Calu3 (cell line): ENCODE measurements at regions of chr4 and their contacts with region 1.

Region 1: GRCh38 chr4:111631215-111631999 is 513.8 kb upstream of the FAM241A start:
- DNase-seq: no peak
- H3K4me3 Mint-ChIP-seq: no peak overlapping the region
- H3K27ac Mint-ChIP-seq: no peak overlapping the region
- H3K4me1 Mint-ChIP-seq: no peaks in the 10 kb centered on the region
- H3K27me3 Mint-ChIP-seq: no peaks in the 10 kb centered on the region
- CTCF ChIP-seq: no peak

Region 2: DNA sequence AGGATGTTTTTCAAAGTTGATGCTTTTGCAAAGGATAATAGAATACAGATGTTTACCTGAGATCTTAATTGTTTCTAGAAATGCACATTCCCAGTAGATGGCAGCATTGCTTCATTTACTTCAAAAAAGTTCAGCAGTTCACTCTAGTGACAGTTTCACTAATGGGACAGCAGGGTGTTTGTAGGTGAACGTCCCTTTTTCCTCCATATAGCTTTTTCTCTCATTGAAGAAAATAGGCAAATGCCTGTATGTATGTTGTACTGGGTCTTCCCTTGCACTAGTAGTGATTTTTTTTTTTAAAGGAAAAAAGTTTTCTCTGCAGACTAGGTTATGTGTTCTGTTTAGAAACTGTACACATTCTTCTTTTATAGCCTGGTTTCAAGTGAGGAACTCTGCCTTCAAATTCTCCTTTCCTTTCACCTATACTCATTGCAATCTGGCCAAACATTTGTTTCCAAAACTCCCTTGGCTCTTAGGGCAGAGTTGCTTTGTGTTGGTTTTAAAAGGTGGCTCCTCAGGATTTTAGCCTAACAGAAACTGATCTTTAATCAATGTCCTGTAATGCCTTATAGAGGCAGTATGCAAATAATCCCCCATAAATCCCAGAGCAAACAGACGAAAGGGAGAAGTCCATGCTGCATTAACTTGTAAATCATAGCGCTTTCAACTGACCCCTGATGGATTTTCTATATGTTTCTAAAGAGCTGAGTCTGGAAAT is 1632.4 kb before region 1 on chr4:
- CTCF ChIA-PET with region 1: no interaction called
- intact Hi-C with region 1: loop called (anchors 2 kb)
- DNase-seq: peak; percentile 30
- H3K4me3 Mint-ChIP-seq: no peak overlapping the region
- H3K27ac Mint-ChIP-seq: no peak overlapping the region
- H3K4me1 Mint-ChIP-seq: no peaks in the 10 kb centered on the region
- H3K27me3 Mint-ChIP-seq: no peaks in the 10 kb centered on the region
- CTCF ChIP-seq: no peak

Region 3: DNA sequence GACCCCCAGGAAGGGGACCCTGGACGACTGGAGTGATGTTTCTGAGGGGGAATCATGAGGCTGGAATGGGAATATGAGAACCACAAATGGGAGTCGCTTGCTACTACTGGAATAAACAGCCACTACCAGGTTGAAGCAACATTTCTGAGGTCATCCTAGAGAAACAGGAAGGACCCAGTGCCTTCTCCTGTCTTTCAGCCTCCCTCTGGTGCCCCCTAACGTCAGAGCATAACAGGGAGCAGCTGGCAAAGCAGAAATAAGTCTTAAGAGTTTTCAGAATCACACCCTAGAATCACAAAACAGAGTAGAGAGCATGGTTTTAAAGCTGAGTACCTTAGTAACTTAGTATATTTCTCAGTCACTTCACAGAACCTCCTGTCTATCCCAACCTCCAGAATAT is 660.8 kb before region 1 on chr4:
- CTCF ChIA-PET with region 1: no interaction called
- intact Hi-C with region 1: loop called (anchors 10 kb)
- DNase-seq: peak; percentile 72
- H3K4me3 Mint-ChIP-seq: no peak overlapping the region
- H3K27ac Mint-ChIP-seq: no peak overlapping the region
- H3K4me1 Mint-ChIP-seq: no peaks in the 10 kb centered on the region
- H3K27me3 Mint-ChIP-seq: no peaks in the 10 kb centered on the region
- CTCF ChIP-seq: peak; percentile 44

Region 4: DNA sequence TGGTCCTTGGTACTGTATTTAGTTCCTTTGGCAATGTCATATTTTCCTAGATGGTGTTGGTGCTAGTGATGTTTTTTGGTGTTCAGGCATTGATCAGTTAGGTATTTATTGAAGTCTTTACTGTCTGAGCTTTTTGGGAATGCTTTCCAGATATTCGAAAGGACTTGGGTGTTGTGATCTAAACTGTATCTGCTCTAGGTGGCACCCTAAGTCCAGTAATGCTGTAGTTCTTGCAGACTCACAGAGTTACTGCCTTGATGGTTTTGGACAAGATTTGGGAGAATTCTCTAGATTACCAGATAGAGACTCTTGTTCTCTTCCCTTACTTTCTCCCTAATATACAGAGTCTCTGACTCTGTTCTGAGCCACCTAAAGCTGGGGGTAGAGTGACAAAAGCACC is 495.0 kb before region 1 on chr4:
- CTCF ChIA-PET with region 1: interaction called, 8 read pairs
- intact Hi-C with region 1: loop called (anchors 1 kb)
- DNase-seq: peak; percentile 10
- H3K4me3 Mint-ChIP-seq: no peak overlapping the region
- H3K27ac Mint-ChIP-seq: no peak overlapping the region
- H3K4me1 Mint-ChIP-seq: no peaks in the 10 kb centered on the region
- H3K27me3 Mint-ChIP-seq: no peaks in the 10 kb centered on the region
- CTCF ChIP-seq: no peak

Region 5: GRCh38 chr4:111283061-111283677 is 348.2 kb before region 1 on chr4:
- CTCF ChIA-PET with region 1: no interaction called
- intact Hi-C with region 1: loop called (anchors 2 kb)
- DNase-seq: peak; percentile 72
- H3K4me3 Mint-ChIP-seq: no peak overlapping the region
- H3K27ac Mint-ChIP-seq: no peak overlapping the region
- H3K4me1 Mint-ChIP-seq: no peaks in the 10 kb centered on the region
- H3K27me3 Mint-ChIP-seq: no peaks in the 10 kb centered on the region
- CTCF ChIP-seq: peak; percentile 43

Region 6: DNA sequence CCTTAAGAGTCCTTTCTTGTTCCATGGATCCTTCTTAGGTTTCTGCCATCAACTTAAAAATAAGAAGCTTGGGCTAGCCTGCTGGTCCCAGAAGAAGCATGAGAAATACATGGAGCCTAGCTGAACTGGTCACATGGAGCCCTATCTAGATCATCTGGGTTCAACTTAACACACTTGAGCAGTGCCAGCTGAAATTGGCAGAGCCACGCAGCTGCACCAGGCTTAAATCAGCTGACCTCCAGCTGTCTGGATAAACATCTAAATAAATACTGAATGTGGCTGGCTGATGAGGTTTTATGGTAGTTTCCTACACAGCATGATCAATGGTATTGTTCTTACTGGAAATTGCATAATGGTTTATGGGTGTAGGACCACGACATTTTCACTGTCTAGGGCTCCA is 84.5 kb before region 1 on chr4:
- CTCF ChIA-PET with region 1: no interaction called
- intact Hi-C with region 1: no loop called
- DNase-seq: no peak
- H3K4me3 Mint-ChIP-seq: no peak overlapping the region
- H3K27ac Mint-ChIP-seq: no peak overlapping the region
- H3K4me1 Mint-ChIP-seq: no peaks in the 10 kb centered on the region
- H3K27me3 Mint-ChIP-seq: no peaks in the 10 kb centered on the region
- CTCF ChIP-seq: no peak

Region 7: DNA sequence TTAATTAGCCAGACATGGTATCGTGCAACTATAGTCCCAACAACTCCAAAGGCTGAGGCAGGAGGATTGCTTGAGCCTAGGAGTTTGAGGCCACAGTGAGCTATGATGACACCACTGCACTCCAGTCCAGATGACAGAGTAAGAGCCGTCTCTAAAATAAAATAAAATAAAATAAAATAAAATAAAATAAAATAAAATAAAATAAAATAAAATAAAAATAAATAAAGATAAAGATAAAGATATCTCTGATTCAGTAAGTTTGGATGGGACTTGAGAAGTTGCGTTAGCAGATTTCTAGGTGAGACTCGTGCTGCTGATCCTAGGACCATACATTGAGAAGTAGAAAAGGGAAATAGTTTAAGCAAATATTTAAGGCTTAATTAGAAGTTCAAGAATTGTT is 259.0 kb after region 1 on chr4:
- CTCF ChIA-PET with region 1: no interaction called
- intact Hi-C with region 1: no loop called
- DNase-seq: no peak
- H3K4me3 Mint-ChIP-seq: no peak overlapping the region
- H3K27ac Mint-ChIP-seq: no peak overlapping the region
- H3K4me1 Mint-ChIP-seq: no peaks in the 10 kb centered on the region
- H3K27me3 Mint-ChIP-seq: no peaks in the 10 kb centered on the region
- CTCF ChIP-seq: no peak